HCT116 (cell line): ENCODE measurements at regions of chr4 and their contacts with region 1.

Region 1: GRCh38 chr4:124334119-124334518 is 378.4 kb downstream of the ANKRD50 start:
- DNase-seq: peak; percentile 60
- ATAC-seq: peak; percentile 91
- H3K4me3 ChIP-seq: 0 out of 4 replicates have a peak overlapping the region, but pooled peaks of 1 of the 2 experiments have one; percentile 8
- H3K27ac ChIP-seq: no peak overlapping the region
- H3K4me1 ChIP-seq: peaks cover 0 to 3% of the 10 kb centered on the region in 2 experiments; a peak in 1 of 4 replicates
- H3K27me3 ChIP-seq: no peaks in the 10 kb centered on the region
- CTCF ChIP-seq: peak; percentile 48 to 70 (median 48); a peak in 5 of 6 replicates
- POLR2A ChIP-seq: no peak
- RAD21 ChIP-seq: peak; percentile 85

Region 2: DNA sequence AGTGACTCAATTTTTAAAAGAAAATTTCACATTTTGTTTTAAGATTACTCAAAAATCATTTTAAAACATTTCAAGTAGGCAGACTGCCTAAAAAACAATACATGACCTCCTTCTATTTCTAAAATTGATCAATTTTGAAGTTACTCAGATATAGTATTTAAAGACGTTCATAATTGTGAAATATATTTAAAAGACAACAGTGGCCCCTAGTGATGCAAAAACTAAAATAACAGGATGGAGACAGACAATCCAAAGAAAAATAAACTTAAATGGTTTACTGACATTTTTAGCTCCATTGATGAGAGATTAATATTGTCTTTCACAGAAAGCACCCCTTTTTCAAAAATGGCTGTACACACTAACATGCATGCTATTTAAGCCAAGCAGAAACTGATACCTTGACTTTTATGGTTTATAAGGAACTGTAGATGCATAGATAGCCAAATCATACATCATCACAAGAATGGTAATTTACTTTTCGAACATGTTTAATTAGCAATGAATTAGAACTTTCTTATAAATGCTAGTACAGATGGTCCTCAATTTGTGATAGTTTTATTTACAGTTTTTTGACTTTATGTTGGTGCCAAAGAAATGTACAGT is 910.8 kb after region 1 on chr4:
- CTCF ChIA-PET with region 1: interaction called, 36 read pairs
- POLR2A ChIA-PET with region 1: no interaction called
- RAD21 ChIA-PET with region 1: interaction called in 1 of 2 experiments, 4 read pairs
- intact Hi-C with region 1: loop called (anchors 1 kb)
- DNase-seq: no peak
- ATAC-seq: no peak
- H3K4me3 ChIP-seq: no peak overlapping the region
- H3K27ac ChIP-seq: no peak overlapping the region
- H3K4me1 ChIP-seq: no peaks in the 10 kb centered on the region
- H3K27me3 ChIP-seq: no peaks in the 10 kb centered on the region
- CTCF ChIP-seq: peak; percentile 12 to 56 (median 37); a peak in 3 of 6 replicates
- POLR2A ChIP-seq: no peak
- RAD21 ChIP-seq: peak; percentile 59